Naive thymus-derived CD4-positive, alpha-beta T cell (primary cell): ENCODE measurements at regions of chr12 and their contacts with region 1.

Region 1: GRCh38 chr12:29519585-29520182 is 22.2 kb upstream of the OVCH1 start:
- DNase-seq: peak in 5 of 9 donors; percentile 10 to 34 (median 22)
- ATAC-seq: no peak
- H3K4me3 ChIP-seq: no peak overlapping the region
- H3K4me3 Mint-ChIP-seq: no peak overlapping the region
- H3K27ac ChIP-seq: no peak overlapping the region
- H3K27ac Mint-ChIP-seq: no peak overlapping the region
- H3K4me1 ChIP-seq: no peaks in the 10 kb centered on the region
- H3K4me1 Mint-ChIP-seq: no peaks in the 10 kb centered on the region
- H3K27me3 ChIP-seq: no peaks in the 10 kb centered on the region
- H3K27me3 Mint-ChIP-seq: peaks cover 2 to 11% (median 8%) of the 10 kb centered on the region in 5 donors

Region 2: DNA sequence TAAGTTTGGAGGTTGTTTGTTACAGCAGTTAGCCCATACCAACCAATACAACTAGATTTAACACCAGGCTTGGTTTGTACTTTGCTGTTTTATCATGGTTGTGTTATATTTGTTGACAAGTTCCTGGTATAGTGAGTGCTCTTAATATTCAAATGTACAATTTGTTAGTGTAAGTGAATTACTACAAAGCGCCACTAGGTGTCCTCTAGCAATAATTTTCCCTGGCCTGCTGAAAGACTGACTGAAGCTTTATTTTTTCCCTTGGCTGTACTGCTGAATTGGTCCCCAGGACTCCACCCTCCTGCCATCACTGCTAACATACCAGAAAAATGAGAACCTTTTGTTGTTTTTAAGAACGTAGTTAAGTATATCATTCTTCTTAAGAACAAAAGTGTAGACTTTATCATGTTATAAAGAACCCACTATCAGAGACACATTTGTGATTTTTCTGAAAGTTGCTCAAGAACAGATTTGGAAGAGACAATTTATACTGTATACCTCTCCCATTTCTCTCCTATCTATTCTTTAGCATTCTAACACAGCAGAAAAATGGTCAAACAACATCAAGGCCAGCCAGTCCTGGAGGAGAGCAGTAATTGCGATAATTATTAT is 445.9 kb before region 1 on chr12:
- CTCF ChIA-PET with region 1: no interaction called
- POLR2A ChIA-PET with region 1: no interaction called
- intact Hi-C with region 1: loop called in 1 of 2 experiments (anchors 1 kb)
- DNase-seq: peak in 6 of 9 donors; percentile 7 to 47 (median 34)
- ATAC-seq: peak; percentile 73
- H3K4me3 ChIP-seq: no peak overlapping the region
- H3K4me3 Mint-ChIP-seq: no peak overlapping the region
- H3K27ac ChIP-seq: no peak overlapping the region
- H3K27ac Mint-ChIP-seq: peak overlapping the region in 2 of 9 donors; percentile 26 to 65
- H3K4me1 ChIP-seq: no peaks in the 10 kb centered on the region
- H3K4me1 Mint-ChIP-seq: no peaks in the 10 kb centered on the region
- H3K27me3 ChIP-seq: no peaks in the 10 kb centered on the region
- H3K27me3 Mint-ChIP-seq: peaks cover 12 to 45% (median 23%) of the 10 kb centered on the region in 5 donors

Region 3: GRCh38 chr12:29309320-29309902 is 210.3 kb before region 1 on chr12:
- CTCF ChIA-PET with region 1: interaction called, 3 read pairs
- POLR2A ChIA-PET with region 1: interaction called, 3 read pairs
- intact Hi-C with region 1: loop called (anchors 1 to 2 kb)
- DNase-seq: peak in 1 of 9 donors; percentile 6
- ATAC-seq: no peak
- H3K4me3 ChIP-seq: no peak overlapping the region
- H3K4me3 Mint-ChIP-seq: no peak overlapping the region
- H3K27ac ChIP-seq: no peak overlapping the region
- H3K27ac Mint-ChIP-seq: no peak overlapping the region
- H3K4me1 ChIP-seq: no peaks in the 10 kb centered on the region
- H3K4me1 Mint-ChIP-seq: no peaks in the 10 kb centered on the region
- H3K27me3 ChIP-seq: no peaks in the 10 kb centered on the region
- H3K27me3 Mint-ChIP-seq: no peaks in the 10 kb centered on the region

Region 4: DNA sequence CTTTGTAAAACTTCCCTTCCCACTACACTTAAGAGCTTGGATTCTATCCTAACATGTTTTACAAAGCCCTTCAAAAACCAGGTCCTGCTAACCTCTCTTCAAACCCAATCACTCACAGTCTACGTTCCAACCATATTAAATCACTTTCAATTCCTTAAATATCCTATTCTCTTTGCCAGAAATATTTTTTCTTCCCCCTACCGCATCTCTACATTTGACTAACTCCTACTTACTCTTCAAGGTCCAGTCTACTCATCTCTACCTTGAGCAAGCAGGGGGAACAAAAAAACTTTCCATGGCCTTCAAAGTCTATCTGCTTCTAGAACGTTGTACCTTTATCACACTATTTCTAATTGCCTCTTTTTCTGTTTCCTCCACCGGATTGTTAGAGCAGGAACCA is 144.8 kb before region 1 on chr12:
- CTCF ChIA-PET with region 1: no interaction called
- POLR2A ChIA-PET with region 1: no interaction called
- intact Hi-C with region 1: no loop called
- DNase-seq: no peak
- ATAC-seq: no peak
- H3K4me3 ChIP-seq: no peak overlapping the region
- H3K4me3 Mint-ChIP-seq: no peak overlapping the region
- H3K27ac ChIP-seq: no peak overlapping the region
- H3K27ac Mint-ChIP-seq: no peak overlapping the region
- H3K4me1 ChIP-seq: peaks cover 8 to 11% of the 10 kb centered on the region in 2 donors
- H3K4me1 Mint-ChIP-seq: peaks cover 12 to 54% (median 35%) of the 10 kb centered on the region in 7 donors
- H3K27me3 ChIP-seq: no peaks in the 10 kb centered on the region
- H3K27me3 Mint-ChIP-seq: no peaks in the 10 kb centered on the region

Region 5: GRCh38 chr12:29455087-29455486 is 64.6 kb before region 1 on chr12:
- CTCF ChIA-PET with region 1: no interaction called
- POLR2A ChIA-PET with region 1: no interaction called
- intact Hi-C with region 1: no loop called
- DNase-seq: no peak
- ATAC-seq: no peak
- H3K4me3 ChIP-seq: no peak overlapping the region
- H3K4me3 Mint-ChIP-seq: no peak overlapping the region
- H3K27ac ChIP-seq: no peak overlapping the region
- H3K27ac Mint-ChIP-seq: no peak overlapping the region
- H3K4me1 ChIP-seq: no peaks in the 10 kb centered on the region
- H3K4me1 Mint-ChIP-seq: no peaks in the 10 kb centered on the region
- H3K27me3 ChIP-seq: no peaks in the 10 kb centered on the region
- H3K27me3 Mint-ChIP-seq: peaks cover 7 to 26% (median 16%) of the 10 kb centered on the region in 5 donors